CD4-positive, alpha-beta memory T cell (primary cell): ENCODE measurements at regions of chr2 and their contacts with region 1.

Region 1: GRCh38 chr2:222318026-222318711 is 19.4 kb upstream of the PAX3 start:
- DNase-seq: peak; percentile 46 to 61 (median 51)
- H3K4me3 ChIP-seq: peak overlapping the region; percentile 23 to 56
- H3K4me3 Mint-ChIP-seq: peak overlapping the region; percentile 76 to 91 (median 86)
- H3K27ac ChIP-seq: no peak overlapping the region
- H3K27ac Mint-ChIP-seq: no peak overlapping the region
- H3K4me1 ChIP-seq: peaks cover 4% of the 10 kb centered on the region
- H3K4me1 Mint-ChIP-seq: peaks cover 2 to 19% (median 8%) of the 10 kb centered on the region in 4 donors
- H3K27me3 ChIP-seq: peaks cover 16% of the 10 kb centered on the region
- H3K27me3 Mint-ChIP-seq: peaks cover 38 to 48% of the 10 kb centered on the region in 2 donors

Region 2: DNA sequence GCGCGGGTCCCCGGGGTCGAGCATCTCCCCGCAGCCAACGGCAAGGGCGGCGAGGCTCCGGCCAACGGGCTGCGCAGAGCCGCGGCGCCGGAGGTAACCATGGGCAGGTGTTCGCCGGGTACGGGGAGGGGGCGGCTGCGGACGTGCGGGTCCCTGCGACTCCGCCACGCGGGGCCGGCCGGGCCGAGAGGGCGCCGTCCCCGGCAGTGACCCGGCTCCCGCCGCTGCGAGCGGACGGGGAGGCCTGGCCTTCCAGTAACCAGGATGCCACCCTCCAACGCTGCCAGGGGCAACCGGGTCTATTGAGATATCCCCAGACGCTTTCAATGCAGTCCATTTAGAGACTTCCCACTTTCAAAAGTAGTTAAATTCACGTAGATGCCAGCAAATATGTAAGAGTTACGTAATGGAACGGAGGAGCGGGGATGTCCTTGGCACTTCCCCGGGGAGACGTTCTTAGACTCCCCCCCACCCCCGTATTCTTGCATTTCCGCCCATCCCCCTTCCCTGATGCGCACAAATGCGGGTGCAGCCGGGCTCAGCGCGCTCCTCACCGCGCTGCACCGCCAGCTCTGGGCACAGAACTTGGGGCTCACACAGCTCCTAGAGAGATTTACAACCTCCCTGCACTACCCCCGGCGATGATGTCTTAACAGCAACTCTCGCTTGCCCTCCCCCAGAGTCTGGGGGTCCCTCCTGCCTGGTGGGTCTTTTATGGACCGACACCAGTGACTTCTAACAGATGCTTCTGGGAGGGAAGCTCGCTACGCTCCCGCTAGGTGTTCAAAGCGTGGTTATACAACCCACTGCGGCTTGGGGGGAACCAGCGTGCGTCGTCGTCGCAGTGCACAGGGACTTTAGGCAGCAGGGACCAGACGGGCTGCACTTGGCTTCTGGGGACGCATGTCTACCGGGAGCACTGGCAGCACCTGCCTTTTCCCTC is 106.8 kb after region 1 on chr2:
- CTCF ChIA-PET with region 1: no interaction called
- POLR2A ChIA-PET with region 1: no interaction called
- intact Hi-C with region 1: loop called (anchors 2 kb)
- DNase-seq: peak; percentile 36 to 75 (median 38)
- H3K4me3 ChIP-seq: peak overlapping the region; percentile 50 to 65
- H3K4me3 Mint-ChIP-seq: peak overlapping the region; percentile 92 to 97 (median 94)
- H3K27ac ChIP-seq: peak overlapping the region; percentile 58
- H3K27ac Mint-ChIP-seq: peak overlapping the region; percentile 86 to 97 (median 91)
- H3K4me1 ChIP-seq: peaks cover 44% of the 10 kb centered on the region
- H3K4me1 Mint-ChIP-seq: peaks cover 30 to 59% (median 47%) of the 10 kb centered on the region in 4 donors
- H3K27me3 ChIP-seq: no peaks in the 10 kb centered on the region
- H3K27me3 Mint-ChIP-seq: peaks cover 2 to 8% of the 10 kb centered on the region in 2 donors

Region 3: DNA sequence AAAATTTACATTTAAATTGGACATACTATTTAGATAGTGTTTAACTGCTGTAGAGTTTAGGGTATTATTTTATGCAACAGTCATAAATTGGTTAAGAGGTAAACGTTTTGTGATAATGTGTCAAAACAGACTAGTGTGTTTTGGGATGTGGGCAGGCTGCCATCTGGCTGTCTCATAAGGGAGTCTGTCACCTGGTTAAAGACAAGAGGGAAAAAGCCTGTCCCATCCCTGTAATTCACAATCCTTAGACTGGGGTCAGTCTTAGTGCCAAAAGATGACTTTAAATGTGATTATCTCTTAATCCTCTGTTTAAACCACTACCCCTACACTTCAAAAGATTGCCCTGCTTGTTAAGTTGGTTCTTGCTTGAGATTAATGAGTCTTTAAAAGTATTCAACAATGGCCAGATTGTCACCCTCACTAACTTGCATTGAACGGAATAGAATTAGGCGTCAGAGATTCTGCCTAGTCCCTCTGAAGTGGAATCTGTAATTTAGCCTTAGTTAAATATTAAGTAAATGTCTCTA is 165.4 kb after region 1 on chr2:
- CTCF ChIA-PET with region 1: interaction called, 8 read pairs
- POLR2A ChIA-PET with region 1: no interaction called
- intact Hi-C with region 1: loop called (anchors 1 kb)
- DNase-seq: no peak
- H3K4me3 ChIP-seq: no peak overlapping the region
- H3K4me3 Mint-ChIP-seq: no peak overlapping the region
- H3K27ac ChIP-seq: no peak overlapping the region
- H3K27ac Mint-ChIP-seq: no peak overlapping the region
- H3K4me1 ChIP-seq: no peaks in the 10 kb centered on the region
- H3K4me1 Mint-ChIP-seq: peaks cover 0 to 3% (median under 1%) of the 10 kb centered on the region in 4 donors
- H3K27me3 ChIP-seq: no peaks in the 10 kb centered on the region
- H3K27me3 Mint-ChIP-seq: no peaks in the 10 kb centered on the region

Region 4: DNA sequence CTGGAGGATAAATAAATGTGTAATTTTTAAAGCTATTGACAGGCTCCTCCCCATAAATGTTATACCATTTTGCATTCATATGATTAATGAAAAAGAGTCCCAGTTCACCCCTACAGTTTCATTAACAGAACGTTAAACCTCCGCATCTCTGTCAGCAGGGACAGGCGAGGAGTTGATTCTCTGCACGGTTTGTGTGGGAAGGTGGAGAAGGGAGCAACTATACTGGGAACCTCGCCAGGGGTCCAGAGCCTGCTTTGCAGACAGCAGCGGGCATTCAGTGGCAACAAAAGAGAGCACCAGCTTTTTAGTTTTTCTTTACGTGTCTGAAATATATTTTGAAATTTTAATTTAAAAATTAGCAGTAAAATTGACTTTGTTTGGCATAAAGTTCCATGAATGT is 236.3 kb after region 1 on chr2:
- CTCF ChIA-PET with region 1: interaction called, 43 read pairs
- POLR2A ChIA-PET with region 1: no interaction called
- intact Hi-C with region 1: no loop called
- DNase-seq: no peak
- H3K4me3 ChIP-seq: no peak overlapping the region
- H3K4me3 Mint-ChIP-seq: no peak overlapping the region
- H3K27ac ChIP-seq: no peak overlapping the region
- H3K27ac Mint-ChIP-seq: no peak overlapping the region
- H3K4me1 ChIP-seq: no peaks in the 10 kb centered on the region
- H3K4me1 Mint-ChIP-seq: peaks cover 0 to 3% (median under 1%) of the 10 kb centered on the region in 4 donors
- H3K27me3 ChIP-seq: no peaks in the 10 kb centered on the region
- H3K27me3 Mint-ChIP-seq: peaks cover 2 to 3% of the 10 kb centered on the region in 2 donors

Region 5: GRCh38 chr2:222561817-222562645 is 243.9 kb after region 1 on chr2:
- CTCF ChIA-PET with region 1: interaction called, 43 read pairs
- POLR2A ChIA-PET with region 1: no interaction called
- intact Hi-C with region 1: no loop called
- DNase-seq: peak; percentile 16 to 52 (median 36)
- H3K4me3 ChIP-seq: no peak overlapping the region
- H3K4me3 Mint-ChIP-seq: no peak overlapping the region
- H3K27ac ChIP-seq: no peak overlapping the region
- H3K27ac Mint-ChIP-seq: peak overlapping the region in 1 of 7 donors; percentile 65
- H3K4me1 ChIP-seq: no peaks in the 10 kb centered on the region
- H3K4me1 Mint-ChIP-seq: peaks cover 0 to under 1% (median 0%) of the 10 kb centered on the region in 4 donors
- H3K27me3 ChIP-seq: no peaks in the 10 kb centered on the region
- H3K27me3 Mint-ChIP-seq: peaks cover 0 to 2% of the 10 kb centered on the region in 2 donors

Region 6: GRCh38 chr2:222613715-222614331 is 295.7 kb after region 1 on chr2:
- CTCF ChIA-PET with region 1: interaction called, 12 read pairs
- POLR2A ChIA-PET with region 1: interaction called, 3 read pairs
- intact Hi-C with region 1: loop called (anchors 1 kb)
- DNase-seq: peak in 4 of 5 donors; percentile 2 to 23 (median 16)
- H3K4me3 ChIP-seq: no peak overlapping the region
- H3K4me3 Mint-ChIP-seq: no peak overlapping the region
- H3K27ac ChIP-seq: no peak overlapping the region
- H3K27ac Mint-ChIP-seq: peak overlapping the region in 1 of 7 donors; percentile 36
- H3K4me1 ChIP-seq: no peaks in the 10 kb centered on the region
- H3K4me1 Mint-ChIP-seq: no peaks in the 10 kb centered on the region
- H3K27me3 ChIP-seq: no peaks in the 10 kb centered on the region
- H3K27me3 Mint-ChIP-seq: no peaks in the 10 kb centered on the region